Activated B cell treated with CpG ODN at 0.5 μM for 24 hours (primary cell): ENCODE measurements at regions of chr2 and their contacts with region 1.

Region 1: DNA sequence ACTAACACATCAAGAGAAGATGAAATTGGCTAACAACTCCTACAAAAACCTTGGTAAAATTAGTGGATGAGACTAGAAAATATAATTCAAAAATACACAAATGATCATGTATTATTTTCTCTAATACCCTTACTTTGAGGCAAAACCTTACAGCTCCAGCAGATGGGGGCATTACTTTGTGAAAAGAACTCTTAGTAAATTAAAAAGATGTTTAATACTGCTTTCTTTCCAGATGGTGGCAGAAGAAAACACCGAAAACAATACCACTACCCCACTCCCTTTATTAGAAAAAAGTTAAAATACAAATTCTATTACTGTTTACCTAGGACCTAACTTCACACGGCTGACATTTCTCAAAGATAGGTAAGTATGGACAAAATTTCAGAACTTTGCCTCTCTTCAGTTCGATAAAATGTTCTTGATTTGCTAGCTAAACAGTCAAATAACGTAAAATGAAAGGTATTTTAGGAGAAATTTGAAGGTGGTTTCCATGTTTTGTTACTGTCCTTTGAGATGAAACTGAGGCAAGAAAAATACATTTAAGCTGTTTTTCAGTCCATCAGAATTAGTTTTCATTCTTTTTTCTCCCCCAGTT is 30.6 kb downstream of the ORC4 start:
- DNase-seq: no peak
- ATAC-seq: peak; percentile 83
- H3K4me3 Mint-ChIP-seq: no peak overlapping the region
- H3K27ac Mint-ChIP-seq: no peak overlapping the region
- H3K4me1 Mint-ChIP-seq: peaks cover 18% of the 10 kb centered on the region
- H3K27me3 Mint-ChIP-seq: no peaks in the 10 kb centered on the region
- CTCF ChIP-seq: no peak

Region 2: DNA sequence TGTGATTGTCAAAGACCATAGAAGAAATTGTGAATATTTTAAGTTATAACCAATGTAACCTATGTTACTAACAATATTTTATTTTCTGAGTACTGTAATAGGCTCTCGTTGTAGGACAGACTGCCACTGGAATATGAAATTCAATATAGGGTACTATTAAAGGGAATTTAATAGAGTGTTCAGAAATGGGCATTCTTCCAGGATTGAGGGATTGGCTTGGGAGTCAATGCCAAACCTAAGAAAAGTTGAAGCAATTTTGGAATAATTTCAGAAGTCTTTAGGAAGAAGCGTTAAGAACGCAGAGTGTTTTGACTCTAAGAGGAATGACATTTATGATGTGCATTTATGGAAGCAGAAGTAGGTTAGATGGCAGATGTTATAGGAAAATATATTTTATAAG is 66.1 kb before region 1 on chr2:
- CTCF ChIA-PET with region 1: no interaction called
- POLR2A ChIA-PET with region 1: no interaction called
- intact Hi-C with region 1: no loop called
- DNase-seq: no peak
- ATAC-seq: no peak
- H3K4me3 Mint-ChIP-seq: no peak overlapping the region
- H3K27ac Mint-ChIP-seq: no peak overlapping the region
- H3K4me1 Mint-ChIP-seq: no peaks in the 10 kb centered on the region
- H3K27me3 Mint-ChIP-seq: no peaks in the 10 kb centered on the region
- CTCF ChIP-seq: no peak

Region 3: GRCh38 chr2:147952118-147952517 is 37.8 kb before region 1 on chr2:
- CTCF ChIA-PET with region 1: no interaction called
- POLR2A ChIA-PET with region 1: no interaction called
- intact Hi-C with region 1: no loop called
- DNase-seq: no peak
- ATAC-seq: no peak
- H3K4me3 Mint-ChIP-seq: no peak overlapping the region
- H3K27ac Mint-ChIP-seq: no peak overlapping the region
- H3K4me1 Mint-ChIP-seq: no peaks in the 10 kb centered on the region
- H3K27me3 Mint-ChIP-seq: no peaks in the 10 kb centered on the region
- CTCF ChIP-seq: no peak

Region 4: GRCh38 chr2:148020111-148021058 is 30.5 kb after region 1 on chr2 and contains the start of gene ORC4:
- CTCF ChIA-PET with region 1: interaction called, 4 read pairs
- POLR2A ChIA-PET with region 1: interaction called, 3 read pairs
- intact Hi-C with region 1: loop called (anchors 2 kb)
- DNase-seq: peak; percentile 78
- ATAC-seq: peak; percentile 89
- H3K4me3 Mint-ChIP-seq: peak within 1 kb of the TSS; percentile 100
- H3K27ac Mint-ChIP-seq: peak within 1 kb of the TSS; percentile 95
- H3K4me1 Mint-ChIP-seq: peaks cover 71% of the 10 kb centered on the region
- H3K27me3 Mint-ChIP-seq: no peaks in the 10 kb centered on the region
- CTCF ChIP-seq: no peak
- total RNA-seq, gene ORC4: 28.2 and 30.7 TPM in 2 replicates

Region 5: DNA sequence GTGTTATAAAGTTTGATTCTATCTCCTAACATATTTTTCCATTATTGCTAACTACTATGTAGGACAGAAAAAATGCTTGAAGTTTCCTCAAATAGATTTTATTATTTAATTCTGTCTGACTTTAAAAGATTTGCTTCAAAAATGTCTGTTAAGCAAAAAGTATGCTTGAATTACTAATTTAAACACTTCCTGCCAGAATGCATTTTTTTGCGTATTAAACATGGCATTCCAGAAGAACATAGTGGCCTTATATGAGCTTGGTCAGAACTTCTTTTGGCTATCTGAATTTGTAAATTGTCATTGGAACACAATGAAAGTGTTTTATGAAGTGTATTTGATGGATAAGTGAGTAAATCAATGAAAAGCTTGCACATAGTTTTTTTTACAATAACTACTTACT is 68.7 kb after region 1 on chr2:
- CTCF ChIA-PET with region 1: no interaction called
- POLR2A ChIA-PET with region 1: no interaction called
- intact Hi-C with region 1: no loop called
- DNase-seq: no peak
- ATAC-seq: no peak
- H3K4me3 Mint-ChIP-seq: no peak overlapping the region
- H3K27ac Mint-ChIP-seq: no peak overlapping the region
- H3K4me1 Mint-ChIP-seq: no peaks in the 10 kb centered on the region
- H3K27me3 Mint-ChIP-seq: no peaks in the 10 kb centered on the region
- CTCF ChIP-seq: no peak

Region 6: DNA sequence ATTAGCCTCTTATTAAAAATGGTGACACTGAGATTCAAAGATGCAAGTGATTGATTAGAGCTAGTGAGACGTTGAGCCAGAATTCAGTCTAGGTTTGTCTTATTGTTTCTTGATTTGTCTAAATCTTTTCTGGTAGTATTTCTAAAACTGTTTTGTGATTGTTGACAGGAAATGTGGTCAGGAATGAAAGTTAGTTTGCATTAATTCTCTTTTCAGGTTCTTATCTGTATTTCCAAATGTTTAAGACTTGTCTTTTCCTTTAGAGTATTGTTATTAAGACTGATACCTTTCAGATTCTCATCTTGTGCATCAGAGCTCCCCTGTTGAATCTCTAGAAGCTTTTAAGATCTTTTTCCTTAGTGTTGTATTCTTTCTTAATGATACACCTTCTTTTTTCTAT is 120.3 kb after region 1 on chr2:
- CTCF ChIA-PET with region 1: no interaction called
- POLR2A ChIA-PET with region 1: no interaction called
- intact Hi-C with region 1: loop called (anchors 5 kb)
- DNase-seq: no peak
- ATAC-seq: no peak
- H3K4me3 Mint-ChIP-seq: no peak overlapping the region
- H3K27ac Mint-ChIP-seq: no peak overlapping the region
- H3K4me1 Mint-ChIP-seq: peaks cover 12% of the 10 kb centered on the region
- H3K27me3 Mint-ChIP-seq: no peaks in the 10 kb centered on the region
- CTCF ChIP-seq: no peak

Region 7: DNA sequence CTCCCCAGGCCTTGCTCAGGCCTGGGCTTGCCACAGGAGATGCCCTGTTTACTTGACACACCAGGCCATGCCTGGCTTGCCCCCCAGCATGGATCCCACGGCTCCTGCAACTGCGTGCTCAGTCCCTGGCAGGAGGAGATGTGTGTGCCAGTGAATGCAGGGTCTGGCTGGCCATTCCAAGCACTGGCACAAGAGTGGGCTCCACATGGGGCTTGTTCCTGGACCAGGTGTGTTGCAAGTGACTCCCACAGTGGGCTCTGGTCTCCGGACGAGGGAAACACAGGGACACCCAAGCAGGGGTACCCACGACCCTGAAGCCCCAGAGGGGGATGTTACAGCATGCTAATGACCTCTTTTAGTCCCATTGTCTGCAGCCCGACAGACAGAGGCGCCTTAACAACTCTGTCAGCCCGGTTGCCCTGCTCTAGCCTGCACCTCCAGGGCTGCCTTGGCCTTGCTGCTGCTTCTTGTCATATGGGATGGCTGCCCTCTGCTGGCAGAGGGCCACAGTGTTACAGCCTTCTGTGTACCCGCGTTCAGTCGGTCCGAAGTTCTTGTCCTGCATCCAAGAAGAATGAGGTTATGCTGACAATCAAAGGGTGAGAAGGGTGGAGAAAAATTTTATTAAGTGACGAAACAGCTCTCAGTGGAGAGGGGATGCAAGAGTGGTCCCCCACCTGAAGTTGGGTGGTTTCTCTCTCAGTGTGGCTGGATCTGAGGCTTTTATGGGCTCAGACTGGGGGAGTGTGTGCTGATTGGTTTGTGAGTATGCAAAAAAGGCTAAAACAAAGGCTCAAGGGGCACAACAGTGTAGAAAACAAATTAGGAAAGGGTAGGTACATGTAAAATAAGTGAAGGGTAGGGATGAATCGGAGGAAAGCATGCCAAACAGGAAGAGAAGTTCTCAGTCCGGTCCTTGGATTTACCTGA is 211.4 kb after region 1 on chr2:
- CTCF ChIA-PET with region 1: interaction called, 6 read pairs
- POLR2A ChIA-PET with region 1: no interaction called
- intact Hi-C with region 1: loop called (anchors 1 kb)
- DNase-seq: peak; percentile 16
- ATAC-seq: peak; percentile 49
- H3K4me3 Mint-ChIP-seq: no peak overlapping the region
- H3K27ac Mint-ChIP-seq: no peak overlapping the region
- H3K4me1 Mint-ChIP-seq: no peaks in the 10 kb centered on the region
- H3K27me3 Mint-ChIP-seq: no peaks in the 10 kb centered on the region
- CTCF ChIP-seq: no peak

Region 8: DNA sequence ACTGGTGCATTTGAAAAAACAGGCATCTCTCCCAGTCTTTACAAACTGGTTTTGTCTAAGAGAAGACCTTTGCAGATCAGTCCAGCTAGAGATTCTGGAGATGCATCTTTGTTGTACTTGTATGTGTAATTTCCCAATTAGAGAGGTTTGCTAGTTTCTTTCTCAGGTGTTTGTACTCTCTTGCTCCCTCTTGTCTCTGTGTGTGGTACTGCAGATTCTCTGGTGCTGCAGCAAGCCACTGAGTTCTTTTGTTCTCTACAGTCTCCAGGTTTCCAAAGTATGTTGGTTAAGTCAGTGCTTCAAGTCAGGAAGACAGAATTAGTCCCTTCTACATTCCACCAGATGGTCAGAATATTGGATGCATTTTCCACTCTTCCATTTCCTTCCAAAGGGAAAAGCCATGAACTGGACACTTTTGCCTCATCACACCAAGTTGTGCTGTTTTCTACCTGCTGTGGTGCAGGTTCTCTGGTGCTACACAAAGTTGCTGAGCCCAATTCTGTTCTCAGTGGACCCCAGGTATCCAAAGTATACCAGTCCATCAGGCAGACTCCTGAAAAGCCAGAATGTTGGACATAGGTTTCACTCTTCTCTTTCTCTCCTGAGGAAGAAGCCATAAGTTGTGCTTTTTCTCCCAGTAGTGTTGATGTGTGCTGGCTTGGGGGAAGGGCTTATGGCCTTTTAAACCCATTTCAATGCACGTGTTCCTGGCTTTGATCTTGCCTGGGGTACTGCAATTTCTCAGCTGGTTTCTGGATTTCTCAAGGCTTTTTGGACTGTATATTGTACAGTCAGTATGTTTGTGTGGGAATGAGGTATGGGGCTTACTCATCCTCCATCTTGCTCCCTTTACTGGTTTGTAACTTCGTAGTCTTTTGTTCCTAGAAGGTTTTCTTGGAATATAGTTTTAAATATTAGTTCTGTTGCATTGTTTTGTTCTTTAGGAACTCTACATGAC is 684.4 kb after region 1 on chr2:
- CTCF ChIA-PET with region 1: no interaction called
- POLR2A ChIA-PET with region 1: no interaction called
- intact Hi-C with region 1: loop called (anchors 5 kb)
- DNase-seq: no peak
- ATAC-seq: peak; percentile 68
- H3K4me3 Mint-ChIP-seq: no peak overlapping the region
- H3K27ac Mint-ChIP-seq: no peak overlapping the region
- H3K4me1 Mint-ChIP-seq: peaks cover 67% of the 10 kb centered on the region
- H3K27me3 Mint-ChIP-seq: no peaks in the 10 kb centered on the region
- CTCF ChIP-seq: no peak

Region 9: DNA sequence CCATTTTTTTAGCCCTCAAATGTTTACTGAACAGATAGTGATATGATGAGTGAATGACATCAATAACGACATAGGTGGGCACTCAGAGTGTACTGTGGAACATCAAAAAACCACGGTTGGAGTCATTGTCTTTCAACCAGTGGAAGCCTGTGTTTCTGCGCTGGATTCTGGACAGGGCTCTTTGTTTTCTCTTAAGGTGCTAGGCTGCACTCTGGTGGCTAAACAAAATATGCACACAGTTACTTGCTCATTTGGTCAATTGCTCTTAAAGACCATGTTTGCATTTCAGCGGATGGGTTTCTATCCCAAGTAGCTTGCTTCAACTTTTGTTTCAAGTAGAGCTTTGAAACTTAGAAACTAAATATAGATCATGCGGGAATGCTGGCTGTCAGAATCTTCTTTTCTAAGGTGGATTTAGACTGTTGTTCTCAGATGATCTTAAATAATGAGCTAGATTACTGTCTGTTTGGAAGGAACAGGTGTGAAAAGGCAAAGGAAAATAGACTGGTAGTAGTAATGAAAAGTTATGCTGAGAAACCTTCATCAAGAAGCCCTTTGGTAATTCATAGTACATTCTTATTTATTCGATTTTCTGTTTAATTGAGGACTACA is 1000.1 kb after region 1 on chr2:
- CTCF ChIA-PET with region 1: interaction called, 9 read pairs
- POLR2A ChIA-PET with region 1: no interaction called
- intact Hi-C with region 1: loop called (anchors 1 kb)
- DNase-seq: no peak
- ATAC-seq: peak; percentile 40
- H3K4me3 Mint-ChIP-seq: no peak overlapping the region
- H3K27ac Mint-ChIP-seq: no peak overlapping the region
- H3K4me1 Mint-ChIP-seq: peaks cover 13% of the 10 kb centered on the region
- H3K27me3 Mint-ChIP-seq: no peaks in the 10 kb centered on the region
- CTCF ChIP-seq: no peak

Region 10: GRCh38 chr2:149561309-149561926 is 1571.5 kb after region 1 on chr2:
- CTCF ChIA-PET with region 1: no interaction called
- POLR2A ChIA-PET with region 1: no interaction called
- intact Hi-C with region 1: loop called (anchors 1 kb)
- DNase-seq: no peak
- ATAC-seq: peak; percentile 31
- H3K4me3 Mint-ChIP-seq: no peak overlapping the region
- H3K27ac Mint-ChIP-seq: no peak overlapping the region
- H3K4me1 Mint-ChIP-seq: peaks cover 8% of the 10 kb centered on the region
- H3K27me3 Mint-ChIP-seq: no peaks in the 10 kb centered on the region
- CTCF ChIP-seq: peak; percentile 100